OCI-LY7 (cell line): ENCODE measurements at regions of chr22 and their contacts with region 1.

Region 1: DNA sequence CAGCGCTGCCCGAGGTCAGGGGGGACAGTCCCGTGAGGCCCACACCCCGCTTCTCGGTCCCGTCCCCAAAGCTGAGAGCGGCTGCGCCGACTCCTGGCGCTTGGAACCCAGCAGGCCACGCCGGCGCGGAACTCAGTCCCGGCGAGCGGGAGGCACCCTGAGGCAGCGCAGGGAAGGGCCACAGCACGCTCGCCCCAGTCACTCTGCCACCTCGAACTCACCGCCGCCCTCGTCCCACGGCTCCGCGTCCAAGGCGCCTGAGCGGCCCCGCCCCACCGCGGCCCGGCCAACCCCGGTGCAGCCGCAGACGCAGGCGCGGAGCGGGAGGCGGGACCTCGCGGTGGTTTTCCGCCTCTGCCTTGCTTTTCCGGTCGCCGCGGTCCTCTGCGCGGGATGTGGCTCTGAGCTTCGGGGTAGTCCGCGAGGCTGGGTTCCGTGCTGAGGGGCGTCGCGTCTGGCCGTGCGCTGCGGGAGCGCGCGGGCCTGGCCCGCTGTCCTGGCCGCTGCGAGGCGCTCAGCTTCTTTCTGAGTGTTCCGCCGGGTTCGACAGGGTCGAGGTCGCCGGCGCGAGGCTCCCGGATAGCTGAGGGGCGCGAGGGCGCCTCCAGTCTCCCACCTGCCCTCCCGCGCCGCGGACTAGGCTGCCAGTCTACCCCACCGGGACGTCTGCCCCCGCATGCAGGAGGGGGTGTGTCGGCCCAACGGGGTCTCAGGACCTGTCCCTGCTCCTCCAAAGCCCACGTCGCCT is at the start of gene CDPF1:
- DNase-seq: peak; percentile 90
- H3K4me3 ChIP-seq: peak within 1 kb of the TSS; percentile 80
- H3K27ac ChIP-seq: peak within 1 kb of the TSS; percentile 59
- H3K4me1 ChIP-seq: peaks cover 25% of the 10 kb centered on the region
- CTCF ChIP-seq: peak; percentile 30; the same call in 1 of the 2 replicates
- total RNA-seq, gene CDPF1: 17.4 and 22.7 TPM in 2 replicates

Region 2: GRCh38 chr22:46150034-46150654 is 100.1 kb before region 1 on chr22 and contains the start of gene PPARA:
- CTCF ChIA-PET with region 1: no interaction called
- POLR2A ChIA-PET with region 1: interaction called, 3 read pairs
- intact Hi-C with region 1: loop called (anchors 1 kb)
- DNase-seq: peak; percentile 83
- H3K4me3 ChIP-seq: peak within 1 kb of the TSS; percentile 72
- H3K27ac ChIP-seq: no peak within 1 kb of the TSS
- H3K4me1 ChIP-seq: peaks cover 16% of the 10 kb centered on the region
- CTCF ChIP-seq: no peak
- total RNA-seq, gene PPARA: 0.90 and 3.3 TPM in 2 replicates

Region 3: DNA sequence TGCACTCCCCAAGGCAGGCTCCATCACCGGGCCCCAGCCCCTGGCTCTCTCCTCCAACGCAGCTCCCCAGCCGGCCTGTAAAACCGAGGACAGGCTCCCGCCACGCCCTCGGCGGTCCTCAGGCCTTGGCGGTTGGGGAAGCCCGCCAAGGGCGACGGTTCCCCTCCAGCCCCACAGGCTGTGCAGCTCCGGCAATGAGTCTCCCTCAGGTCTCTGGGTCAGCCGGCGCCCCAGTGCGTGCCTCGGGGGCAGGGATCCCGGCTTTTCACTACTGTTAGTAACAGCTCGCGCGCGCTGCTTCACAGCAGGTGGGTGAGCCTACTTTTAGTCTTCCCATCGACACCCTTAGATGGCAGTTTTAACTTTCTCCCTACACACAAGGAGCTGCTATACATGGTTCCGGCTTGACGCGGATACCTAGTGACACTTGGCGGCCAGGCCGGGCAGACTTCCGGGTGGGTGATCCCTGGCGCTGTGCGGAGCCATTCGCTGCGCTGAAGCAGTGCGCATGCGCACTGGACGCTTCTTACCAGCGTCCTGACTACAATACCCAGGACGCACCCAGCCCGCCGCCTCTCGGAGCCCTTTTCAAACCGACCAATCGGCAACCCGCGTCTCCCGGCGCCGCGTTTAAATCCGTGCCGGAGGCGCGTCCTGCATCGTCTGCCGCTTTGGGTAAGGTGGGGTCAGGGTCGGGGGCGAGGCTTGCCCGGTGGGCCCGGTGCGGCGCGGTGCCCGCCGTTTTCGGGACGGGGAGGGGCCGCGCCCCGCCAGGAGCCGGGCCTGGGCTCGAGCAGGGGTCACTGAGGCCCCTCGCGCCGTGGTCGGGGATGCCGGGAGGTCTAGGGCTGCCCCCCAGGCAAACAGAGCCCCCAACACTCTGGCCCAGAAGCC is 46.3 kb after region 1 on chr22 and contains the start of gene GTSE1:
- CTCF ChIA-PET with region 1: interaction called, 3 read pairs
- POLR2A ChIA-PET with region 1: interaction called, 5 read pairs
- intact Hi-C with region 1: loop called (anchors 2 kb)
- DNase-seq: peak; percentile 99
- H3K4me3 ChIP-seq: peak within 1 kb of the TSS; percentile 95
- H3K27ac ChIP-seq: peak within 1 kb of the TSS; percentile 87
- H3K4me1 ChIP-seq: peaks cover 49% of the 10 kb centered on the region
- CTCF ChIP-seq: peak; percentile 38; the same call in 1 of the 2 replicates
- total RNA-seq, gene GTSE1: 54.7 and 56.0 TPM in 2 replicates

Region 4: DNA sequence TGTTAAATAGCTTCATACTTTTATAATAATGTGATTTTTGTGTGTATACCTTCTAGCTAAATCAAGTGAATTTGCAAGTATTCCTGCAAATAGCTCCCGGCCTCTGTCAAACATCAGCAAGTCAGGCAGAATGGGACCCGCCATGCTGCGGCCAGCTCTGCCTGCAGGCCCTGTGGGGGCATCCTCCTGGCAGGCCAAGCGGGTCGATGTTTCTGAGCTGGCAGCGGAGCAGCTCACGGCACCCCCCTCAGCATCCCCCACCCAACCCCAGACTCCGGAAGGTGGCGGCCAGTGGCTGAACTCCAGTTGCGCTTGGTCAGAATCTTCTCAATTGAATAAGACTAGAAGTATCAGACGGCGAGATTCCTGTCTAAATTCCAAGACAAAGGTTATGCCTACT is 65.8 kb after region 1 on chr22:
- CTCF ChIA-PET with region 1: no interaction called
- POLR2A ChIA-PET with region 1: no interaction called
- intact Hi-C with region 1: loop called (anchors 2 kb)
- DNase-seq: no peak
- H3K4me3 ChIP-seq: no peak overlapping the region
- H3K27ac ChIP-seq: no peak overlapping the region
- H3K4me1 ChIP-seq: no peaks in the 10 kb centered on the region
- CTCF ChIP-seq: no peak

Region 5: GRCh38 chr22:46528121-46528610 is 278.0 kb after region 1 on chr22:
- CTCF ChIA-PET with region 1: no interaction called
- POLR2A ChIA-PET with region 1: no interaction called
- intact Hi-C with region 1: no loop called
- DNase-seq: no peak
- H3K4me3 ChIP-seq: no peak overlapping the region
- H3K27ac ChIP-seq: no peak overlapping the region
- H3K4me1 ChIP-seq: no peaks in the 10 kb centered on the region
- CTCF ChIP-seq: no peak